A673 (cell line): ENCODE measurements at regions of chr3 and their contacts with region 1.

Region 1: DNA sequence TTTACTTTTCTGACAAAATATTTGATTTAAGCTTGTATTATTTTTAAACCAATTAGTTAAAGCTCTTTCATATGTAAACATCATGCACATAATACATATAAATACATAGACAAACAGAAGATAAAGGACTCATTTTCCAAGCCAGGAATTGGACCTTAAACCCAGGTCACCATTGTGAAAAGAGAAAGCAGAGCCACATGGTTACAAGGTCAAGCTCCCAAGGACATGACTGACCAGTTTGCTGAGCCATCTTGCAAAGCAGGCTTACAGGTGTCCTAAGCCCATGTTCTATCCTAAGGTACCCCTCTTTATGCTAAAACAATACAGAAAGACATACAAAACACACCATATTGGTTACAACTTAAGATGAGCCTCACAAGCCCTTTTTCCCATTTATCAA is 50.5 kb upstream of the DNAJC19 start:
- DNase-seq: no peak
- H3K4me3 ChIP-seq: no peak overlapping the region
- H3K27ac ChIP-seq: no peak overlapping the region
- H3K4me1 ChIP-seq: no peaks in the 10 kb centered on the region
- H3K27me3 ChIP-seq: no peaks in the 10 kb centered on the region
- CTCF ChIP-seq: no peak

Region 2: GRCh38 chr3:180934638-180935037 is 105.4 kb before region 1 on chr3:
- CTCF ChIA-PET with region 1: no interaction called
- POLR2A ChIA-PET with region 1: no interaction called
- intact Hi-C with region 1: no loop called
- DNase-seq: no peak
- H3K4me3 ChIP-seq: no peak overlapping the region
- H3K27ac ChIP-seq: no peak overlapping the region
- H3K4me1 ChIP-seq: no peaks in the 10 kb centered on the region
- H3K27me3 ChIP-seq: no peaks in the 10 kb centered on the region
- CTCF ChIP-seq: no peak

Region 3: GRCh38 chr3:181066143-181067087 is 26.4 kb after region 1 on chr3:
- CTCF ChIA-PET with region 1: interaction called, 13 read pairs
- POLR2A ChIA-PET with region 1: no interaction called
- intact Hi-C with region 1: no loop called
- DNase-seq: no peak
- H3K4me3 ChIP-seq: no peak overlapping the region
- H3K27ac ChIP-seq: no peak overlapping the region
- H3K4me1 ChIP-seq: no peaks in the 10 kb centered on the region
- H3K27me3 ChIP-seq: no peaks in the 10 kb centered on the region
- CTCF ChIP-seq: no peak